WTC11 (cell line): ENCODE measurements at regions of chr1 and their contacts with region 1.

Region 1: GRCh38 chr1:26233903-26234643 is at the start of gene CEP85:
- DNase-seq: peak; percentile 99
- ATAC-seq: peak; percentile 96
- H3K4me3 Mint-ChIP-seq: peak within 1 kb of the TSS; percentile 99
- H3K27ac Mint-ChIP-seq: peak within 1 kb of the TSS; percentile 87
- H3K4me1 Mint-ChIP-seq: peaks cover 25% of the 10 kb centered on the region
- H3K27me3 Mint-ChIP-seq: peaks cover 4% of the 10 kb centered on the region
- CTCF ChIP-seq: peak; percentile 49; the same call in 1 of the 2 replicates
- total RNA-seq, gene CEP85: 32.0 to 40.8 TPM (median 35.3 TPM) in 3 replicates

Region 2: GRCh38 chr1:26021647-26022403 is 212.2 kb before region 1 on chr1 and contains the start of gene EXTL1:
- CTCF ChIA-PET with region 1: no interaction called
- POLR2A ChIA-PET with region 1: no interaction called
- DNase-seq: peak; percentile 75
- ATAC-seq: peak; percentile 94
- H3K4me3 Mint-ChIP-seq: peak within 1 kb of the TSS; percentile 92
- H3K27ac Mint-ChIP-seq: peak within 1 kb of the TSS; percentile 95
- H3K4me1 Mint-ChIP-seq: peaks cover 25% of the 10 kb centered on the region
- H3K27me3 Mint-ChIP-seq: no peaks in the 10 kb centered on the region; the same call in 1 of the 2 replicates
- CTCF ChIP-seq: no peak
- total RNA-seq, gene EXTL1: 1.3 to 2.1 TPM (median 1.9 TPM) in 3 replicates

Region 3: DNA sequence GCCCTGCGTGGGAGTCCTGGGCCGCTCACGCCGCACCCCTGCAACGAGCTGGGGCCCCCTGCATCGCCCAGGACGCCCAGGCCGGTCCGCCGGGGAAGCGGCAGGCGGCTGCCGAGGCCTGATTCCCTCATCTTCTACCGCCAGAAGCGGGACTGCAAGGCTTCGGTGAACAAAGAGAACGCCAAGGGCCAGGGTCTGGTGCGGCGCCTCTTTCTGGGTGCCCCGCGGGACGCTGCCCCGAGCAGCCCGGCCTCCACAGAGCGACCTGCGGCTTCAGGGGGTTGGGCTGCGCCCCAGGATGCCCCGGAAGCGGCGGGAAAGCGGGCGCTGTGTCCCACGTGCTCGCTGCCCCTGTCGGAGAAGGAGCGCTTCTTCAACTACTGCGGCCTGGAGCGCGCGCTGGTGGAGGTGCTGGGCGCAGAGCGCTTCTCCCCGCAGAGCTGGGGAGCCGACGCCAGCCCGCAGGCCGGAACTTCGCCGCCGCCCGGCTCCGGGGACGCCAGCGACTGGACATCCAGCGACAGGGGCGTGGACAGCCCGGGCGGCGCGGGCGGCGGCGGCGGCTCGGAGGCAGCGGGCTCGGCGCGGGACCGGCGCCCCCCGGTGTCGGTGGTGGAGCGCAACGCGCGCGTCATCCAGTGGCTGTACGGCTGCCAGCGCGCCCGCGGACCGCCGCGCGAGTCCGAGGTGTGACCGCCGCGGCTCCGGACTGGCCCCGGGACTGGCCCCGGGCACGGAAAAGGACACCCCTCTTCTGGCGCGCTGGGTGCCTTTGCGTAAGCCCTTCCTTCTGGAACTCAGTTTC is 72.5 kb before region 1 on chr1:
- CTCF ChIA-PET with region 1: interaction called, 20 read pairs
- POLR2A ChIA-PET with region 1: interaction called, 3 read pairs
- DNase-seq: peak; percentile 64
- ATAC-seq: peak; percentile 4; the same call in 1 of the 2 replicates
- H3K4me3 Mint-ChIP-seq: peak overlapping the region; percentile 74
- H3K27ac Mint-ChIP-seq: no peak overlapping the region
- H3K4me1 Mint-ChIP-seq: peaks cover 56% of the 10 kb centered on the region
- H3K27me3 Mint-ChIP-seq: peaks cover 92% of the 10 kb centered on the region
- CTCF ChIP-seq: no peak

Region 4: GRCh38 chr1:26177182-26177684 is 56.8 kb before region 1 on chr1 and contains the start of gene CNKSR1:
- CTCF ChIA-PET with region 1: interaction called, 40 read pairs
- POLR2A ChIA-PET with region 1: no interaction called
- DNase-seq: peak; percentile 94
- ATAC-seq: peak; percentile 100
- H3K4me3 Mint-ChIP-seq: peak within 1 kb of the TSS; percentile 82
- H3K27ac Mint-ChIP-seq: peak within 1 kb of the TSS; percentile 97
- H3K4me1 Mint-ChIP-seq: peaks cover 10% of the 10 kb centered on the region
- H3K27me3 Mint-ChIP-seq: no peaks in the 10 kb centered on the region
- CTCF ChIP-seq: no peak
- total RNA-seq, gene CNKSR1: 18.0 to 20.5 TPM (median 19.7 TPM) in 3 replicates

Region 5: GRCh38 chr1:26210147-26210870 is 23.8 kb before region 1 on chr1:
- CTCF ChIA-PET with region 1: interaction called, 26 read pairs
- POLR2A ChIA-PET with region 1: interaction called, 3 read pairs
- DNase-seq: no peak
- ATAC-seq: no peak
- H3K4me3 Mint-ChIP-seq: no peak overlapping the region
- H3K27ac Mint-ChIP-seq: no peak overlapping the region
- H3K4me1 Mint-ChIP-seq: no peaks in the 10 kb centered on the region
- H3K27me3 Mint-ChIP-seq: no peaks in the 10 kb centered on the region
- CTCF ChIP-seq: no peak

Region 6: DNA sequence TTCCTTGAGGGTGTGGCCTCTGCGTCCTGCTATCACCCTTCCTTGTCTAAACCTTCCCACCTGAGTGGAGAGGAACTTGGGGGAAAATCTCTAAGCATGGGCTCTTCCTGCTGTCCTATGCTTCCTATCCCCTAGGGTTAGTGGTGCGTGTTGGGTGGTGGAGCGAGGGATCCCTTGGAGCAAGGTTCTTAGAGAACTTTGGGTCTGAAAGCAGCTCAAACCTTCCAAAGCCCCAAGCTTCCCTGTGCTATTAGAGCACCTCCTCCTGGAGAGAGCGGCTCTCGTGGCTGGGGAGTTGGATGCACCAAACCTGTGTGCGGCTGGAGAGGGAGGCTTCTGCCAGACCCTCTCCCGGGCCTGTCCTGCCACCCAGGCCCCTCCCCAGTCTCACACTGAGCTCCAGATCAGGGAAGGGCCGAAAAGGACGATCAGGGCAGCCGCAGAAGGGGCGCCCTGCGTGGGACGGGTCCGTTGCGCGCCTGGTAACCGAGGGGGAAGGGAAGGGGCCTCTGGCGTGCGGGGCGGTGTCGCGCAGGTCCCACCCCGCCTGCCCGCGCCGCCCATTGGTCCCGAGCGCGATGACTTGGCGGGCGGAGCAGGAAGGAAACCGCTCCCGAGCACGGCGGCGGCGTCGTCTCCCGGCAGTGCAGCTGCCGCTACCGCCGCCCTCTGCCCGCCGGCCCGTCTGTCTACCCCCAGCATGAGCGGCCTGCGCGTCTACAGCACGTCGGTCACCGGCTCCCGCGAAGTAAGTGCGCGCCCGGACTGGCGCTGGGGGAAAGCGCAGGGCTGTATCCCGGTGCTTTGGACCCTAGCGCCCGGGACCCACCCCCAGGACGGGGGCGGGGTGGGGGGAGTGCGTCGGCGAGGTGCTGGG is 45.6 kb after region 1 on chr1 and contains the start of gene SH3BGRL3:
- CTCF ChIA-PET with region 1: interaction called, 30 read pairs
- POLR2A ChIA-PET with region 1: interaction called, 3 read pairs
- DNase-seq: peak; percentile 76
- ATAC-seq: peak; percentile 71
- H3K4me3 Mint-ChIP-seq: peak within 1 kb of the TSS; percentile 85
- H3K27ac Mint-ChIP-seq: peak within 1 kb of the TSS; percentile 78
- H3K4me1 Mint-ChIP-seq: peaks cover 40% of the 10 kb centered on the region
- H3K27me3 Mint-ChIP-seq: no peaks in the 10 kb centered on the region
- CTCF ChIP-seq: no peak
- total RNA-seq, gene SH3BGRL3: 70.8 to 92.9 TPM (median 92.3 TPM) in 3 replicates